ENCODE measurements at regions of chr10 and their contacts with region 1.

Region 1: DNA sequence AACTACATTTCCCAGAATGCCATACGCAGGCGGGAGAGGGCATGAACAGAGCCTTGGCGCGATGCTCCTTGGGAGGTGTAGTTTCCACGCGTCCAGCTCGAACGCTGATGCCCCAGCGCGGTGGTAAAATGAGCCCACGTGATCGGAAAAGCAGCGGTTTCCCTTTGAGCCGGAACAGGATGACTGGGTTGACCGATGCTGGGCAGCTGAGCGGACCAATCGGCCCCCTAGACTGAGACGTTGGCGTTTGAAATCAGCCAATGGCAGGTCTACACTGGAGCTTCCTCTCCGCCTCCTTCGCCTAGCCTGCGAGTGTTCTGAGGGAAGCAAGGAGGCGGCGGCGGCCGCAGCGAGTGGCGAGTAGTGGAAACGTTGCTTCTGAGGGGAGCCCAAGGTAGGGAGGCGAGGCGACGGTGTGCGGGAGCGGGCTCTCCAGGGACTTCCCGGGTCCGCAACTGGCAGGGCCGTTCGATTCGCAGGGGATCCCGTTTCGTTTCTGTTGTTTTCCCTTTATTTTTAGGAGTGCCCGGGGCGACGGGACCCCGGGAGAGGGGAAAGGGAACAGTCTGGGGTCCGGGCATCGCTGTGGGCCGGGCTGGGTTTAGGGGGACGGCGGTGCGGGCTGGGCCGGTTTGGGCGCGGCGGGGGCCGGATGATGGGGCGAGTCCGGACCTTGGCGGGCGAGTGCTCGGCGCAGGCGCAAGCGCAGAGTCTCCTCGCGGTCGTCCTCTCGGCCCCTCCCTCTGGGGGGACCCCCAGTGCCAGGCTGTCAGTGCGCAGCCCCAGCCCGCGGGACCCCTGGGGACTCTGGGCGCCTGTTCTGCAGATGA is at the start of gene BUB3:
- DNase-seq: peak; percentile 99
- H3K4me3 ChIP-seq: peak within 1 kb of the TSS; percentile 79 to 99 (median 86)
- H3K27ac ChIP-seq: peak within 1 kb of the TSS; percentile 70 to 80 (median 73)
- H3K4me1 ChIP-seq: peaks cover 13 to 33% of the 10 kb centered on the region in 2 donors
- H3K27me3 ChIP-seq: peaks cover 29% of the 10 kb centered on the region
- CTCF ChIP-seq: peak in 3 of 6 experiments; percentile 19 to 24 (median 19)
- POLR2A ChIP-seq: peak; percentile 9 to 83
- total RNA-seq, gene BUB3: 67.9 to 117 (median 88.0) TPM

Region 2: DNA sequence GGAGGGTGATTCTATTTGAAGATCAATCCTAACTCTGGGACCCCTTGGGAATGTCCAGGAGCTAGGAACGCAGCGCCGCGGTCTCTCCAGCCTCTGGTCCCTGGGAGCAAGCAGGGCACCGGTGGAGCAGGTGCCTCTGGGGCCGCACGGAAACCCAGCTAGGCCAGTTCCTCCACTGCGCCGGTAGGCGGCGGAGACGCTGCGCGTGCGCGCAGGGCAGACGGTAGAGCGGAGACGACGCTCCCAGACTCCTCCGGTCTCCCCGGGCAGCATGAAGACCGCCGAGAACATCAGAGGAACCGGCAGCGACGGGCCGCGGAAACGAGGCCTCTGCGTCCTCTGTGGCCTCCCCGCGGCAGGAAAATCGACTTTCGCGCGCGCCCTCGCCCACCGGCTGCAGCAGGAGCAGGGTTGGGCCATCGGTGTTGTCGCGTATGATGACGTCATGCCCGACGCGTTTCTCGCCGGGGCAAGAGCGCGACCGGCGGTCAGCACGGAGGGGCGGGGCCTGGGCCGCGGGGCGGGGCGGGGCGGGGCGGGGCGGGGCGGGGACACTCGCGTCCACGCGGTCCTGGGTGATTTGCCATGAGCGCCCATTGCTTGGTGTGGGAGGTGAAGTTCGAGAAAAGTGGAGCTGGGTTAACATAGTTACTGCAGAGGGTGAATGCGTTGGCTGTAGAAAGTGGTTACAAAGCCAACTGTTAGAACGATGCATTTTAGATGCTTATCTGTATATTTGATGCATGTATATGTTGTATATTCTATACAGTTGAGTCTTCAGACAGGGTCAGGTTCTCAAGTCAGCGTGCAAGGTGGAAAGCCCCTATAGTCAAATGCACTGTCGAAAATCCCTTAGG is 173.9 kb before region 1 on chr10 and contains the start of gene PSTK:
- intact Hi-C with region 1: loop called (anchors 10 kb)
- DNase-seq: peak; percentile 86 to 88
- H3K4me3 ChIP-seq: peak within 1 kb of the TSS; percentile 39 to 90 (median 89)
- H3K27ac ChIP-seq: peak within 1 kb of the TSS; percentile 79 to 96 (median 80)
- H3K4me1 ChIP-seq: peaks cover 4 to 8% of the 10 kb centered on the region in 2 donors
- H3K27me3 ChIP-seq: no peaks in the 10 kb centered on the region
- CTCF ChIP-seq: peak; percentile 79 to 98 (median 95)
- POLR2A ChIP-seq: peak in 1 of 2 donors; percentile 68
- total RNA-seq, gene PSTK: 3.9 to 6.3 (median 5.2) TPM